ENCODE measurements at regions of chr17 and their contacts with region 1.

Region 1: DNA sequence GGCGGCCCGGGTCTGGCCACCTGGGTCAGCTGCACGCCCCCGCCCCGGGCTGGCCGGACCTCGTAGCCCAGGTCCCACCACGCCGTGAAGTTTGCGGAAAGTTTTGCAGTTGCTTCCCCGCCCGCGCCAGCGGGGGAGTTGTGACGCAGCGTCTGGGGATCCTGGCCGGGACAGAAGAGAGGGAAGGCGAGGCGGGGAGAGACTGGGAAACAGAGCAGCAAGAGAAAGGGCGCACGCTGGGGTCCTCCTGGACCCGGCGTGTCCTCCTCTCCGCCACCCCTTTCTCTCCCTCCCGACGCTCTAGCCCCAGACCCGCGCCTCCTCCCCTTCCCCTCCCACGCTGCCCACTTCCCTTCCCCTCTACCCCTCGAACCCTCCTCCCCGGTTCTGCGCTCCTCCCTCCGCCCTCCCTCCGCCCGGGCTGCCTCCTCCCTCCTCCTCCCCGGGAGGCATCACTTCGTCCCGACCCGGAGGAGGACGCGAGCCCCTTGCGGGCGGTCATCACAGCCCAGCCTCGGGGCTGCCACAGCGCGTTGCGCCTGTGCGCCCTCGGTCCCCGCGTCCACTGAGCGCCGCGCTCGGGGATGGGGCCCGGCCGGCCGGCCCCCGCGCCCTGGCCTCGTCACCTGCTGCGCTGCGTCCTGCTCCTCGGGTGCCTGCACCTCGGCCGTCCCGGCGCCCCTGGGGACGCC is at the start of gene MRC2:
- DNase-seq: peak; percentile 89 to 94
- ATAC-seq: peak; percentile 84
- H3K4me3 ChIP-seq: peak within 1 kb of the TSS; percentile 61
- H3K27ac ChIP-seq: peak within 1 kb of the TSS; percentile 62 to 95
- H3K4me1 ChIP-seq: no peaks in the 10 kb centered on the region
- H3K27me3 ChIP-seq: no peaks in the 10 kb centered on the region
- total RNA-seq, gene MRC2: 93.8 to 232 TPM

Region 2: GRCh38 chr17:62399294-62399872 is 228.0 kb before region 1 on chr17:
- intact Hi-C with region 1: no loop called
- DNase-seq: no peak
- ATAC-seq: no peak
- H3K4me3 ChIP-seq: no peak overlapping the region
- H3K27ac ChIP-seq: no peak overlapping the region
- H3K4me1 ChIP-seq: no peaks in the 10 kb centered on the region
- H3K27me3 ChIP-seq: no peaks in the 10 kb centered on the region

Region 3: GRCh38 chr17:62653002-62653825 is 25.8 kb after region 1 on chr17:
- intact Hi-C with region 1: loop called in 1 of 2 experiments (anchors 2 kb)
- DNase-seq: peak; percentile 87 to 88
- ATAC-seq: peak; percentile 72
- H3K4me3 ChIP-seq: peak overlapping the region; percentile 9 to 24
- H3K27ac ChIP-seq: no peak overlapping the region
- H3K4me1 ChIP-seq: no peaks in the 10 kb centered on the region
- H3K27me3 ChIP-seq: no peaks in the 10 kb centered on the region

Region 4: GRCh38 chr17:62680541-62681052 is 53.2 kb after region 1 on chr17:
- intact Hi-C with region 1: loop called in 1 of 2 experiments (anchors 5 kb)
- DNase-seq: peak in 1 of 2 donors; percentile 75
- ATAC-seq: peak; percentile 47
- H3K4me3 ChIP-seq: no peak overlapping the region
- H3K27ac ChIP-seq: no peak overlapping the region
- H3K4me1 ChIP-seq: no peaks in the 10 kb centered on the region
- H3K27me3 ChIP-seq: no peaks in the 10 kb centered on the region